Left lung (tissue), 14 donors: ENCODE measurements at regions of chr10 and their contacts with region 1.

Region 1: GRCh38 chr10:129030996-129031843 is 435.8 kb upstream of the MGMT start:
- DNase-seq: peak in 1 of 4 donors; percentile 68
- ATAC-seq: peak; percentile 97
- H3K4me3 ChIP-seq: no peak overlapping the region
- H3K27ac ChIP-seq: no peak overlapping the region
- H3K4me1 ChIP-seq: no peaks in the 10 kb centered on the region
- H3K27me3 ChIP-seq: peaks cover 42 to 91% of the 10 kb centered on the region in 2 donors
- CTCF ChIP-seq: peak; percentile 70 to 82

Region 2: DNA sequence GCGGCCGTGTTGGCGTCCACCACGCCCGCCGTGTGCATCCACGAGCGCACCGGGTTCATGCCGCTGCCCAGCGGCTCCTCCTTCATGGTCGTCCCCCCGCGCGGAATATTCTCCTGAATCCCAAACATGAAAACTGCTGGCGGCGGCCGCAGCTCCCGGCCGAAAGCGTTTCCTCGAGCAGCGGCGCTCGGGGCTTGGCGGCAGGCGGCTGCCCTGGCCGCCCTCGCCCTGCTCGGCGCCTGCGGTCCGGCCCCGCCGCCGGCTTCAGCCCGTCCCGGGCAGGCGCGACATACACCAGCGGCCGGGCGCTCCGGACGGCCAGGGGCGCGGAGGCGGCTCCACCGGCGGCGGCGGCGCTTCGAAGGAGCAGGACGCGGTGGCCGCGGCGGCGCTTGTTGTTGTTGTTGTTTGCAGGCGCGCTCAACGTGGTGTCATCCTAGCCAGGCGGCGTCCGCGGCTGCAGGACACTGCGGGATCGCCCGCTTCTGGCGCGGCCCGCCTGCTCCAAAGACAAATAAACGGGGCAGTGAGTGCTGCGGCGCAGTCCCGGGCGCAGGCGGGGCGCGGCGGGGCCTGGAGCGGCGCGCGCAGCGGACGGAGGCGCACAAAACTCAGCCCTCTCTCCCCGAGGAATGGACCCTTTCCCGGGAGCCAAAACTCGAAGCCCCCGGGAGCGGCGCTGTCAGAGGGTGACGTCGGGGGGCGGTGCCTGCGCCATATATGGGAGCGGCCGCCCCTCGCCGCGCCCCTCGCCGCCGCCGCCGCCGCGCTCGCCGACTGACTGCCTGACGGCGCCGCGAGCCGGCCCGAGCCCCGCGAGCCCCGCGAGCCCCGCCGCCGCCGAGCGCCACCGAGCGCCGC is 932.7 kb after region 1 on chr10 and contains the start of gene EBF3:
- intact Hi-C with region 1: loop called in 1 of 2 experiments (anchors 10 kb)
- DNase-seq: peak in 2 of 4 donors; percentile 80 to 81
- ATAC-seq: peak; percentile 83
- H3K4me3 ChIP-seq: peak within 1 kb of the TSS; percentile 27 to 44
- H3K27ac ChIP-seq: no peak within 1 kb of the TSS
- H3K4me1 ChIP-seq: peaks cover 0 to 46% of the 10 kb centered on the region in 2 donors
- H3K27me3 ChIP-seq: peaks cover 96 to 100% of the 10 kb centered on the region in 2 donors
- CTCF ChIP-seq: no peak
- polyA plus RNA-seq, gene EBF3: 1.1 to 2.0 (median 1.5) TPM